ENCODE measurements at regions of chrX and their contacts with region 1.

Region 1: DNA sequence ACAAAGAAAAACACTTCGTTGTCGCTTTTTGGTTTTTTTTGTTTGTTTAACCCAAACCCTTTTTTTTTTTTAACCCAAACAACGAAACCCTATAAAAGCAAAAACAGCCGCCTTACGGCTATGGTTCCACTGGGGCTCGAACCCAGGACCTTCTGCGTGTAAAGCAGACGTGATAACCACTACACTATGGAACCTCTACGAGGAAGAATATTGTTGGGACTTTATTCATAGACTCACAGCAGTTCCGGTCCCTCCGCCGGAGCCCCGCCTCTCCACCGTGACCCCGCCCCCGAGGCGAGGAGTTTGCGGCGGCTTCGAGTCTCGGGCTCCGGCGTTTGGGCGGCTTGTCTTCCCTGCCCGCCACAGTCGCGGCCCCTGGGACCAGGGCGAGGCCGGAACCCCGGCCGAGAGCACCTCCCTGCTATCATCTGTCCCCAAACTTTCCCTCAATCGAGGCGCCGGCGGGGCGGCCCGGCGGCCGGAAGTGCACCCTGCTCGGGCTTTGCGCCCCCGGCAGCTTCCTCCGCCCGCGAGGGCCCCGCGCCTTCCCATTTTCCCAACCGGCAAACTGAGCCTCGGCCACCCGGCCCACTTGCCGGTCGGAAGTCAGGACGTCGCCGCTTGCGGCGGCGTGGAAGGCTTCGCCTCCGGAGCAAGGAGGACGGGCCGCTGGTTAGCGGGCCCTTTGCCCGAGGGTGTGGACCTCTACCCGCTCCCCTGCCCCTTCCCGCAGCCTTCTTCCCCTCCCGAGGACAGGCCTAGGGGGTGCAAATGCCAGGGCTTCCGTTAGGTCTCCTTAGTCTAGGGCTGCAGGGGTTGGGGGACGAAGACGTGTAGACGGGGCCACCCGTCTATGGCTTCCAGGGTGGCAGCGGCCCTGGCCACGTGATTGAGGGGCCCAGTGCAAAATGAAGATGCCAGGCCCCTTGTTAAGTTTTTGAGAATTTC is 3.2 kb upstream of the RS1 start:
- DNase-seq: peak; percentile 79
- H3K4me3 Mint-ChIP-seq: peak overlapping the region; percentile 69
- H3K27ac Mint-ChIP-seq: peak overlapping the region; percentile 77
- H3K4me1 Mint-ChIP-seq: no peaks in the 10 kb centered on the region
- H3K27me3 Mint-ChIP-seq: no peaks in the 10 kb centered on the region

Region 2: DNA sequence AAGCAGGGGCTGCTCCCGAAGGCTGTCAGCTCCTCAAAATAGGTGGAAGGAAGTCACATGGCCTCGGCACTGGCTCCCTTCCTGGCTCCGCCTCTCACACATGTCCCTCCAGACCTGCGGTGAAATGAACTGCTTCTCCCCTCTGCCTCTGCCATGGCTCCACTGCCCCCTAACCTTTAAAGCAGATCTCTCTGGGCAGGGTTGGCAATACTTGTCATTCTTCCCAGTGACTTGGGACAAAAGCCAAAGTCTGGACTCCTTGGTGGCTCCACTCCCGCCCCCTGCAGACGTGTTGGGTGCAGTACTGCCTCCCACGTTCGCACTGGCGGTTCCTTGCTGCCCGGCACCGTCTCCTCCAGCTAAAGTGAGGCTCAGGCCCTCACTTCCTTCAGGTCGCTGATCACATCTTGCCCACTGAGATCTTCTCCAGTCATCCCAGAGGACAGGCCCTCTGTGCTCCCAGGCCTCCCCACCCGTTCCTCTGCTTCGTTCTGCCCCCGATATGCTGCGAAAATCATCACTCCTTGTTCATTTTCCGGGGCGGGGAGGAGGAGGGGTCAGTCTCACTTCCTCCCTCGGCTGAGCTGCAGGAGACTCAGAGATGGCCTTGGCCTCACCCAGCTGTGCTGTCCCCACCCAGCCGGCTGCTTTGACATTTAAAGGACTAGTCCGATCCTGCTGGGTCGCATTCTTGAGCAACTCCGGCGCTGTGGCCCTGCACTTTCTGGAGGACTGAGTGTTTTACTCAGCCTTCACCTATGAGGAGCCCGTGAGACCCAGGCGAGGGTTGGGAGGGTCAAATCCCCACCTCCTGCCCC is 211.5 kb after region 1 on chrX:
- CTCF ChIA-PET with region 1: no interaction called
- POLR2A ChIA-PET with region 1: no interaction called
- intact Hi-C with region 1: loop called (anchors 5 kb)
- DNase-seq: peak; percentile 70
- H3K4me3 Mint-ChIP-seq: peak overlapping the region; percentile 81
- H3K27ac Mint-ChIP-seq: peak overlapping the region; percentile 89
- H3K4me1 Mint-ChIP-seq: peaks cover 20% of the 10 kb centered on the region
- H3K27me3 Mint-ChIP-seq: no peaks in the 10 kb centered on the region

Region 3: DNA sequence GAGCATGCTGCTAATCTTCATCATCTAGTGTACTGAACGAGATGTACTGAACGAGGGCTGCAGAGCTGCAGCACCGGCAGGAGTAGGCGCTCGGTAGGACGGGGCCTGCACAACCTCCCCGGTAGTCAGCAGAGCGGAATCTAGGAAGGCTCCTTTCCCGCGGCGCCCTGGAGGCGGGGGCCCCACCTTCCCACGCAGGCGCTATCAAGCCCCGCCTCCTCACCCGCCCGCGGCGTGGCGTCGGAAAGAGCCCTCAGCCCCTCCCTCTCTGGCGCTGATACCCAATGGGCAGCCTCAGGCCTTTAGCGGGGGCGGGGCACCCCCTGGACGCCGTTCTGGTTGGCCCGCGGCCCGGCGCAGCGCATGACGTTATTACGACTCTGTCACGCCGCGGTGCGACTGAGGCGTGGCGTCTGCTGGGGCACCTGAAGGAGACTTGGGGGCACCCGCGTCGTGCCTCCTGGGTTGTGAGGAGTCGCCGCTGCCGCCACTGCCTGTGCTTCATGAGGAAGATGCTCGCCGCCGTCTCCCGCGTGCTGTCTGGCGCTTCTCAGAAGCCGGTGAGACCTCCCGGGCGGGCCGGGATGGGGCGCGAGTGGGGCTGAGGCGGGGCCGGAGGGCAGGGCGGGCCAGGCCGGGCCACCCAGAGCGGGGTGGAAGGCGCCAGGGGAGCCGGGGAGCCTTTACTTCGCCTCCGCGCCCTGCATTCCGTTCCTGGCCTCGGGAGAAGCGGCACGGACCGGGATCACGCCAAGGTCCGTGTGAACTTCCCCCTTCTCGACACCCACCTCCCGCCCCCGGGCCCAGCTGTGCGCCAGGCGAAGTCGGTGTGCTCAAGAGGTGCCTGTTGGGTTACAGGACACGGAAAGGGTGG is 668.7 kb after region 1 on chrX and contains the start of gene PDHA1:
- CTCF ChIA-PET with region 1: no interaction called
- POLR2A ChIA-PET with region 1: no interaction called
- intact Hi-C with region 1: loop called (anchors 2 kb)
- DNase-seq: peak; percentile 95
- H3K4me3 Mint-ChIP-seq: peak within 1 kb of the TSS; percentile 81
- H3K27ac Mint-ChIP-seq: peak within 1 kb of the TSS; percentile 76
- H3K4me1 Mint-ChIP-seq: peaks cover 22% of the 10 kb centered on the region
- H3K27me3 Mint-ChIP-seq: no peaks in the 10 kb centered on the region
- total RNA-seq, gene PDHA1: 245 TPM

Measured in activated CD4-positive, alpha-beta memory T cell treated with anti-CD3 and anti-CD28 coated beads for 36 hours (primary cell).